Heart right ventricle (tissue), 16 donors: ENCODE measurements at regions of chr10 and their contacts with region 1.

Region 1: DNA sequence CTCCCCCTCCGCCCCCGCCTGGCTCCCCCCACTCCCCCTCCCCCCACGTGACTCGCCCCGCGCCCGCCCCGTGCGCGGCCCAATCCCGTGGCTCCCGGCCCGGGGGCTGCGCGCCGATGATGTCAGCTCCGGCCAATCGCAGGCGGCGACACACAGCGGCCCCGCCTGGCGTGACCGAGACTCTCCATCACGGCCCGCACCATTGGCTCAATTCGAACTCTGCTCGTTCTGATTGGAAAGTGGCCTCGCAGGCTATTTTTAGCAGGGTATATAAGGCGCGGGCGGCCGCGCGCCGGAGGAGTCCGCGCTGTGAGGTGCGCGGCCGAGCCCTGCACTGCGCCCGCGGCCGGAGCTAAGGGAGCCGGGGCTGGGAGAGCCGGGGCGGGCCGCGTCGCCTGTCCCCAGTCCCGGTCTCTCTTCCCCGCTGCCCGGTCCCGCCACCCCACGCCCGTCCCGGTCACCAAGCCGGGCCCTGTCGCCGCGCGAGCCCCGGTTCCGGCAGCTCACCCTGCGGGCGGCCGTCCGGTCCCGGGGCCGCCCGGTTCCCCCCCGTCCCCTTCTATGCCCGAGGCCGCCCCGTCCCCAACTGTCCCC is 345 bp upstream of the KLF6 start:
- DNase-seq: peak; percentile 99
- ATAC-seq: peak; percentile 82 to 92 (median 84)
- H3K4me3 ChIP-seq: peak overlapping the region; percentile 67 to 99 (median 94)
- H3K27ac ChIP-seq: peak overlapping the region; percentile 99 to 100 (median 100)
- H3K4me1 ChIP-seq: peaks cover 11 to 34% (median 27%) of the 10 kb centered on the region in 9 donors
- H3K27me3 ChIP-seq: no peaks in the 10 kb centered on the region
- CTCF ChIP-seq: peak in 2 of 9 donors; percentile 3 to 15

Region 2: GRCh38 chr10:3452173-3452626 is 333.2 kb before region 1 on chr10:
- intact Hi-C with region 1: loop called in 2 of 10 experiments (anchors 5 kb)
- DNase-seq: peak in 1 of 2 donors; percentile 52
- ATAC-seq: peak in 7 of 8 donors; percentile 71 to 92 (median 84)
- H3K4me3 ChIP-seq: peak overlapping the region in 3 of 10 donors; percentile 2 to 20 (median 11)
- H3K27ac ChIP-seq: peak overlapping the region; percentile 10 to 85 (median 76)
- H3K4me1 ChIP-seq: peaks cover 0 to 49% (median 28%) of the 10 kb centered on the region in 9 donors
- H3K27me3 ChIP-seq: no peaks in the 10 kb centered on the region
- CTCF ChIP-seq: peak; percentile 21 to 72 (median 48)

Region 3: DNA sequence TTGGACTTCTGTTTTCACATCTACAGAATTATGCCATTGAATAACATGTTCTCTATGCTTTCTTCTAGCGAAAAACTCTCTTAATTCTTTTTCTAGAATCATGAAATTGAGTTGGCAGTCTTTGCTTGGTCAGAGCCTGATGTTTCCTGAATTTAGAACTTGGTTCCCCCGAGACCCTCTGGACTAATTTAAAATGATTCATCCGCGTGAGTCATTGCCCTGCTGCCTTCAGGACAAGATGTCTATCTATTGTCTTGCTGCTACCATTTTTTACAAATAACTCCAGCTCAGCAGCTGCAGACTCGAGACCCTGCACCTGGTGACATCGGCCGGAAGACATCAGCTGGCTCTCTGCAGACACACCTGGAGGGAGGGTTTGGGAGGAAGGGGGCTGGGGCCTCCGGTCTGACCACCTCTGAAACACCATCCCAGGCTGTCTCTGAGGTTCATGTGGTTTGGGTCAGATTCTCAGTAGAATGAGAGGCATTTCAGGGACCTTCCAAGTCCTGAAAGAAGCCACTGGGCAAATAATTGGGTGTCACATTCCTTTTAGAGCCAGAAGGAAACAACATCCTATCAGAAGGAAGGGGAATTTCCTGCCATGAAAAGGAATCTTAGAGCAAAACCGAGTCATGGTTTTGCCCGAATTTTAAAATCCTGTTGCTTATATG is 20.6 kb after region 1 on chr10:
- intact Hi-C with region 1: loop called in 2 of 10 experiments (anchors 2 kb)
- DNase-seq: peak; percentile 24 to 74
- ATAC-seq: peak in 7 of 8 donors; percentile 9 to 64 (median 27)
- H3K4me3 ChIP-seq: peak overlapping the region in 6 of 10 donors; percentile 1 to 25 (median 8)
- H3K27ac ChIP-seq: peak overlapping the region; percentile 51 to 95 (median 89)
- H3K4me1 ChIP-seq: peaks cover 12 to 88% (median 71%) of the 10 kb centered on the region in 9 donors
- H3K27me3 ChIP-seq: no peaks in the 10 kb centered on the region
- CTCF ChIP-seq: no peak

Region 4: GRCh38 chr10:3869036-3869435 is 83.7 kb after region 1 on chr10:
- intact Hi-C with region 1: no loop called
- DNase-seq: no peak
- ATAC-seq: peak in 1 of 8 donors; percentile 50
- H3K4me3 ChIP-seq: no peak overlapping the region
- H3K27ac ChIP-seq: no peak overlapping the region
- H3K4me1 ChIP-seq: peaks cover 0 to 27% (median 7%) of the 10 kb centered on the region in 9 donors
- H3K27me3 ChIP-seq: no peaks in the 10 kb centered on the region
- CTCF ChIP-seq: no peak

Region 5: DNA sequence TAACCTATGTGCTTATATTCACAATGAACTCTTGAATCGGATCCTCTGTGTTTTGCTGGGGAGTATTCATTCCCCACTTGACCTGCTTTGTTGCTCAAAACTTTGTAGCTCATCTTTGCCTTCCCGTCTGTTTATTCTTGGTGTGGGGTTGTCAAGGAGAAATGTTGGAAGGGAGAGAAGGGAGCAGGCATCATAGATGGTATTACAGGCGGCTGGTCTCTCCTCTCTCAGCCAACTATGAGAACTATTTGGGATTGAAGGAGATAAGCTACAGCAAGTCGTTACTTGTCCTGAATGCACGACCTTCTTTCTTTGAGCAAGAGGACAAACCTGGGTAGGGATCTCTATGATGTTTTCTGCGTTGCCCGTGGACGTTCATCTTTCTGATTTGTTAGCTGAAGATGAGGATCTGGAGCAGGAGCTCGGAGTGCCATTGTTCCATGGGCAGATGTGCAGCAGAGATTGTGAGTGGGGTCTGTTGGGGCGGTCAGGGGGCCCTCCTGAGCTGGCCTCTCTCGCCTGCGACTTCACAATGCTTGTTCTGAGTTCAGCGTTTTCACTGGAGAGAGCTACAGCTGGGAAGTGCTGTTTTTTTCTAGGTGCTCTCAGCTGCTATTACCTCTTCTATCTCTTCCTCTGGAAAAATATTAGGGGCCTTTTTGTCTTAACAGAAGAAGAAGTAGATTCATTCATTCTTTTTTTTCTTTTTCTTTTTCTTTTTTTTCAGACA is 126.5 kb after region 1 on chr10:
- intact Hi-C with region 1: loop called in 2 of 10 experiments (anchors 5 to 10 kb)
- DNase-seq: no peak
- ATAC-seq: peak; percentile 68 to 89 (median 82)
- H3K4me3 ChIP-seq: peak overlapping the region in 9 of 10 donors; percentile 19 to 57 (median 48)
- H3K27ac ChIP-seq: peak overlapping the region; percentile 57 to 90 (median 84)
- H3K4me1 ChIP-seq: peaks cover 0 to 17% (median 7%) of the 10 kb centered on the region in 9 donors
- H3K27me3 ChIP-seq: no peaks in the 10 kb centered on the region
- CTCF ChIP-seq: no peak

Region 6: GRCh38 chr10:4081685-4082111 is 296.3 kb after region 1 on chr10:
- intact Hi-C with region 1: loop called in 3 of 10 experiments (anchors 5 to 10 kb)
- DNase-seq: peak in 1 of 2 donors; percentile 43
- ATAC-seq: peak in 7 of 8 donors; percentile 29 to 75 (median 64)
- H3K4me3 ChIP-seq: no peak overlapping the region
- H3K27ac ChIP-seq: peak overlapping the region in 8 of 10 donors; percentile 47 to 87 (median 64)
- H3K4me1 ChIP-seq: peaks cover 4 to 62% (median 51%) of the 10 kb centered on the region in 9 donors
- H3K27me3 ChIP-seq: no peaks in the 10 kb centered on the region
- CTCF ChIP-seq: no peak

Region 7: GRCh38 chr10:4512671-4513240 is 727.4 kb after region 1 on chr10:
- intact Hi-C with region 1: loop called in 3 of 10 experiments (anchors 5 to 10 kb)
- DNase-seq: peak; percentile 40 to 58
- ATAC-seq: peak; percentile 49 to 94 (median 76)
- H3K4me3 ChIP-seq: no peak overlapping the region
- H3K27ac ChIP-seq: peak overlapping the region in 9 of 10 donors; percentile 2 to 90 (median 77)
- H3K4me1 ChIP-seq: peaks cover 0 to 48% (median 34%) of the 10 kb centered on the region in 9 donors
- H3K27me3 ChIP-seq: no peaks in the 10 kb centered on the region
- CTCF ChIP-seq: peak; percentile 21 to 71 (median 56)

Region 8: DNA sequence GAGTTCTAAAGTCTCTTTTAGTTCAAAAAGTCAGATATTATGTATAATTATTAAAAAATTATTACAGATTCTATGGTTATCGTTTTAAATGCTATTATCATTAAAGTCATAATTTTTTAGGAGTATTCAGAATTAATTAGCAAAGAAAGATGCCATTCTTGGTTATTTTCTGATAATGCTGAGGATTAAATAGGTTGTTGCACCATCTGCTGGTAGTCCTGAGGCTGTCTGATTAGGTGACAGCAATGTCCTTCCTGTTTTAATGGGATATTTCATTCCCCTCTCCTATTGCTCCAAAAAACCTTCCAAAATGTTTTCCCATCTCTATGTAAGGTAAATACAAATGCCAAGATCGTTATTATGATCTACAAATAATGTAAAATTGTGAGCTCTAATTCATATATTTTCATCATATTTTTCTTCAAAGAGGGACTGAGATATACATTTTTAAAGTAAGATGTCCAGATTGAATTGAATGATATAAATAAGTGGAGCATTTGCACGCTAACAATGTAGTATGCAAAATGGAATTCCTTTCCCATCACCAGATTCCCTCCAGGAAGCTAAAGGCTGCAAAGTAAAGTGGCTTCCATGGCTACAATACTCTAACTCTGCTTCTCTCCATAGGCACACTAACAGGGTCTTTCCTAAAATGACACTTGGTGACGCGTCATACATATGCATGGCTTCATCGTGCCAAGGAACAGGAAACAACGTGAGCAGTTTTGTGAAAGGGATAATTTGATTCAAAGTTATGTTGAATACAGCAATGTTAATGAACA is 981.9 kb after region 1 on chr10:
- intact Hi-C with region 1: loop called in 6 of 10 experiments (anchors 2 to 10 kb)
- DNase-seq: peak in 1 of 2 donors; percentile 30
- ATAC-seq: peak in 6 of 8 donors; percentile 40 to 72 (median 66)
- H3K4me3 ChIP-seq: no peak overlapping the region
- H3K27ac ChIP-seq: peak overlapping the region in 9 of 10 donors; percentile 4 to 75 (median 39)
- H3K4me1 ChIP-seq: peaks cover 5 to 64% (median 38%) of the 10 kb centered on the region in 9 donors
- H3K27me3 ChIP-seq: no peaks in the 10 kb centered on the region
- CTCF ChIP-seq: peak; percentile 51 to 92 (median 82)

Region 9: GRCh38 chr10:5490753-5491464 is 1705.6 kb after region 1 on chr10:
- intact Hi-C with region 1: no loop called
- DNase-seq: no peak
- ATAC-seq: no peak
- H3K4me3 ChIP-seq: no peak overlapping the region
- H3K27ac ChIP-seq: no peak overlapping the region
- H3K4me1 ChIP-seq: no peaks in the 10 kb centered on the region
- H3K27me3 ChIP-seq: peaks cover 0 to 10% (median 0%) of the 10 kb centered on the region in 7 donors
- CTCF ChIP-seq: no peak